Posterior vena cava (tissue), 2 donors: ENCODE measurements at regions of chr6 and their contacts with region 1.

Region 1: GRCh38 chr6:42075159-42075838 is 25.0 kb downstream of the TAF8 start:
- DNase-seq: peak; percentile 93

Region 2: DNA sequence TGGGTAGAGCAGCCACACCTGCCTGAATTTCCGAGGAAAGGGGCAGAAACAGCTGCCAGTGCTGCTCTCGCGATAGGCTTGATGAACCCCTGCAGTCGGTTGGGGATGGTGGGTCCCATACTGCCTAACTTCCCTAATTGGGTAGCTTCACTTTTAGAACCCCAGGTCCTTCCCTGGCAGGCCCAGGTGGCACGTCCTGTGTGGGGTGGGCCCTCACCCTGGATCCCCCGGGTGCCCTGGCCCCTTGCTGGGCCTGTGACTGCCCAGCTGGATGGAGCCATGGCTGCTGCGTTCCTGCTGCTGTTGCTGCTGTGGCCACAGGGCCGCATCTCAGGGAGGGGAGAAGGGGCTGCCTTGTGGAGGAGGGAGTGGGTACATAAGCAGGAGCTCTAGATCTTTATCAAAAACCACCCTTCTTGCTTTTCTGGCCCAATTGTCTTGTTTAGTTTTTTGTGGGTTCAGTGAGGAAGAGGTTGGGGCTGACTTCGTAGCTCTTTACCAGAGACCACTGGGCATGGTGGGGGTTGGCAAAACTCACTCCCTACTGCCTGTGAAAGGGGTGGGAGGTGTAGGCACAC is 827.9 kb before region 1 on chr6:
- intact Hi-C with region 1: no loop called
- DNase-seq: peak; percentile 71

Region 3: DNA sequence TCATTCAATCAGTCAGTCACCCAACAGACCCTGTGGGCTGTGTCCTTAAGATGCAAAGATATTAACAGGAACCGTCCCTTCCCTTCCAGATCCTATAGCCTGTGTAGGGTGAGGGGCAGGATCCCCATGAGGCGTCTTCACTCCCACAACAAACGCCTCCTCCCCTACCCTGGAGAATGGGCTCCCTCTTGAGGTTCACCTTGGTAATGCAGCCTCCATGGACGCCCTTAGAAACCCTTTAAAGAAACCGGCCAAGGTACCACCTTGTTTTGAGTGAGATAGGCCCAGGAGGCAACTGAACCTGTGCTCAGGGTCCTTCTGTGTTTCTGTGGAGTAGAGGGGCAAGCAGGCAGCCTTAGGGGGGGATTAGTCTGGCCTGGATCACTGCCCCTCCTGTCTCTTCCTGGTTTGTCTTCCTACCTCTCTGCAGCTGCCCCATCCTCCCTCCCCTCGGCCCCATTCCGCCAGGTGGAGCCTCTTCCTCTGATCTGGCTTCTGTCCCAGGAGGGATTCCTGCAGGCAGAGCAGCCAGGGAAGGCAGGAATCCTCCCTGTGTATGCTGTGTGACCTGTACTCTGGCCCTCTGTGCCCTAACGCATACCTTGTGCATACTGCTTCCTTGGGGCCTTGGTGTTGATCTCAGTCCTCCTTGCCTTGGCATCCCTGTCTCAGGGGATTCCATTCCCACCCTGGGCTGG is 91.3 kb after region 1 on chr6:
- intact Hi-C with region 1: loop called (anchors 2 to 5 kb)
- DNase-seq: no peak

Region 4: GRCh38 chr6:42217519-42218367 is 142.4 kb after region 1 on chr6 and contains the start of gene MRPS10:
- intact Hi-C with region 1: loop called in 1 of 2 experiments (anchors 10 kb)
- DNase-seq: peak; percentile 98
- total RNA-seq, gene MRPS10: 22.5 to 26.8 TPM

Region 5: DNA sequence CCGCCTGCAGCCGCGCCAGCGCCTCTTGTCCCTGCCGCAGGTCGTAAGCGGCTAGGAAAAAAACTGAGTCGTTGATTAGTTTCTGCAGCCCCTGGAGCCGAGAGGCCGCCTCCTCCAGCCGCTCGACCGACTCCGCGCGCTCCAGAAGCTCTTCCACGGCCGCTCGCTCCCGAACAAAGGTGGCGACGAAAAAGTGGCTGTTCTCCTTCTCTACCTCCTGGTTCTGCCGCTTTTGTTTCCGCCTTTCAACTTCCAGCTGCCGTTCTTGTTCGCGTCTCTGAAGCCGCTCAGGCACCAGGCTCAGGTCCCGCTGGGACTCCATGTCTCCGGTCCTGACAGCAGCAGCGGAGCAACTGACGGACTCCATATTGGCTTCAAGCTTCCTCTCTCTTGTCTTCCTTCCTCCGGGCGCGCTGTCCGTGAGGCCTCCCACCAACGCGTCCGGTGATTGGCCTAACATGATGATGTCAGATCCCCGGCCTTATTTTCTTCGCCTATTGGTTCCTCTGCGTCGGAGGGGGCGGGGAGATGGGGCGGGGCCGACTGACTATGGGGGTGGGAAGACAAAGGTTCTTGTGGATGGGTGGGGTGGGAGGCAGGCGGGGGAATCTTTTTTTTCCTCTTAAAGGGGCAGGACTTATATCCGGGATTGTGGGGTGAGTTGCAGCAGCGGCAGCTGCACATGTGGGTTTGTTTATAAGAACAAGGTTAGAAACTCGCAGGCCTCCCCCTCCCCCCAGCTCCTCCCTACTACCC is 670.6 kb after region 1 on chr6 and contains the start of gene TBCC:
- intact Hi-C with region 1: no loop called
- DNase-seq: peak; percentile 98
- total RNA-seq, gene TBCC: 13.9 to 16.2 TPM